CD8-positive, alpha-beta memory T cell (primary cell): ENCODE measurements at regions of chr6 and their contacts with region 1.

Region 1: GRCh38 chr6:33126101-33126714 is 50.4 kb downstream of the HLA-DPB1 start:
- DNase-seq: peak in 4 of 5 donors; percentile 36 to 71 (median 53)
- H3K4me3 ChIP-seq: no peak overlapping the region
- H3K4me3 Mint-ChIP-seq: peak overlapping the region in 1 of 7 donors; percentile 38
- H3K27ac ChIP-seq: no peak overlapping the region
- H3K27ac Mint-ChIP-seq: no peak overlapping the region
- H3K4me1 ChIP-seq: no peaks in the 10 kb centered on the region
- H3K4me1 Mint-ChIP-seq: no peaks in the 10 kb centered on the region
- H3K27me3 ChIP-seq: no peaks in the 10 kb centered on the region
- H3K27me3 Mint-ChIP-seq: peaks cover 7 to 30% of the 10 kb centered on the region in 2 donors

Region 2: DNA sequence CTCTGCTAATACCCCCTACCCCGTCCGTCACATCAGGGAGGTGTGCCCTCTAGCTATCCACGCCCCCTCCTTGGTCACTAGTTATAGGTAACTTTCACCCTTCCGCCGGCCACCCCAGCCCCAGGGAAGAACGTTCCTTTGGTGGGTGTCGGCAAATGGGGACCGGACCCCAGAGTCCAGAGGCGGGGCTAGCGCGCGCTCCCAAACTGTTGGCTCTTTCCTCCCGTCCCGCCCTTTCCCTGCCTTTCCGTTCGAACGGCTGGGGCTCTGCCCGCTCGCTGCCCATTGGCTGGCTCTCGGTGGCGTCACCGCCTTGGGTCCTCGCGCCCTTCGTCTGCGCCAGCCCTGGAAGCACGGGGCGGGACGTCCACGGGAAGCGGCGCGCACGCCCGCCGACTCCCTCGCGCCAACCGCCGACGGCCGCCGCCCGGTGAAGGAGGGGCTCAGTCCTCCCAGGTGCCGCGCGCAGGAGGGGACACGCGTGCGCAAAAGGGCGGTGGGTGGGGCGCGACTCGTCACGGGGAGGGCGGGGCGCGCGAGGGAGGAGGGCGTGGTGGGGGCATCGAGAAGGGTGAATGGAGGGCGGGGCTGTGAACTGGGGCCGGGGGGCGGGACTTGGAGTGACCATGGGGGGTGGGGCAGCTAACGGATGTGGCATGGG is 284.0 kb after region 1 on chr6:
- CTCF ChIA-PET with region 1: no interaction called
- POLR2A ChIA-PET with region 1: no interaction called
- DNase-seq: peak; percentile 95 to 99 (median 98)
- H3K4me3 ChIP-seq: peak overlapping the region; percentile 87
- H3K4me3 Mint-ChIP-seq: peak overlapping the region; percentile 85 to 94 (median 91)
- H3K27ac ChIP-seq: peak overlapping the region; percentile 95
- H3K27ac Mint-ChIP-seq: peak overlapping the region; percentile 94 to 100 (median 98)
- H3K4me1 ChIP-seq: peaks cover 42% of the 10 kb centered on the region
- H3K4me1 Mint-ChIP-seq: peaks cover 47 to 55% (median 52%) of the 10 kb centered on the region in 3 donors
- H3K27me3 ChIP-seq: no peaks in the 10 kb centered on the region
- H3K27me3 Mint-ChIP-seq: no peaks in the 10 kb centered on the region

Region 3: GRCh38 chr6:34036357-34037069 is 910.3 kb after region 1 on chr6:
- CTCF ChIA-PET with region 1: no interaction called
- POLR2A ChIA-PET with region 1: interaction called, 17 read pairs
- DNase-seq: no peak
- H3K4me3 ChIP-seq: no peak overlapping the region
- H3K4me3 Mint-ChIP-seq: no peak overlapping the region
- H3K27ac ChIP-seq: no peak overlapping the region
- H3K27ac Mint-ChIP-seq: no peak overlapping the region
- H3K4me1 ChIP-seq: no peaks in the 10 kb centered on the region
- H3K4me1 Mint-ChIP-seq: no peaks in the 10 kb centered on the region
- H3K27me3 ChIP-seq: no peaks in the 10 kb centered on the region
- H3K27me3 Mint-ChIP-seq: peaks cover 0 to 2% of the 10 kb centered on the region in 2 donors